Activated CD4-positive, alpha-beta memory T cell treated with anti-CD3 and anti-CD28 coated beads for 36 hours (primary cell): ENCODE measurements at regions of chr11 and their contacts with region 1.

Region 1: GRCh38 chr11:123103326-123103980 is 41.5 kb upstream of the HSPA8 start:
- DNase-seq: peak; percentile 42
- H3K4me3 Mint-ChIP-seq: no peak overlapping the region
- H3K27ac Mint-ChIP-seq: no peak overlapping the region
- H3K4me1 Mint-ChIP-seq: peaks cover 16% of the 10 kb centered on the region
- H3K27me3 Mint-ChIP-seq: no peaks in the 10 kb centered on the region

Region 2: GRCh38 chr11:123083623-123084029 is 19.8 kb before region 1 on chr11:
- CTCF ChIA-PET with region 1: interaction called, 12 read pairs
- POLR2A ChIA-PET with region 1: no interaction called
- intact Hi-C with region 1: no loop called
- DNase-seq: peak; percentile 91
- H3K4me3 Mint-ChIP-seq: peak overlapping the region; percentile 58
- H3K27ac Mint-ChIP-seq: peak overlapping the region; percentile 85
- H3K4me1 Mint-ChIP-seq: peaks cover 63% of the 10 kb centered on the region
- H3K27me3 Mint-ChIP-seq: no peaks in the 10 kb centered on the region

Region 3: GRCh38 chr11:123235117-123235655 is 131.7 kb after region 1 on chr11:
- CTCF ChIA-PET with region 1: interaction called, 14 read pairs
- POLR2A ChIA-PET with region 1: no interaction called
- intact Hi-C with region 1: no loop called
- DNase-seq: peak; percentile 58
- H3K4me3 Mint-ChIP-seq: no peak overlapping the region
- H3K27ac Mint-ChIP-seq: no peak overlapping the region
- H3K4me1 Mint-ChIP-seq: peaks cover 15% of the 10 kb centered on the region
- H3K27me3 Mint-ChIP-seq: no peaks in the 10 kb centered on the region